ENCODE measurements at regions of chr18 and their contacts with region 1.

Region 1: DNA sequence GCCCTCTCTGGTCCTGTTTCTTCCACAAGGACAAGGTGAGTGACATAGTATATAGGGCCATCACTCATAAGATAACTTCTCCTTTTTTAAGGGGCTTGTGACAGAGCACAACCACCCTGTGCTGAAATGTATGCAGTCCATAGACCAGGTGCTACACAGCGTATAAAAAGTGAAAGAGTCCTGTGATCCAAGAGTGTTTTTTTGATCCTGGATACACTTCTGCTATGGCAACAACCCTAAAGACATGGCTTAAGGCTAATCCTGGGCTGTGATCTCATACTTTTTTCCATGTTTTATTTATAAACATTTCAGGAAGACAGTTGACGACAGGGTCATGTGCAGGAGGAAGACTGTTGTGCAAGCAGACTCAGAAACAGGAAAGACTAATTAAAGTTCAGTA is 400.5 kb upstream of the TCF4 start:
- DNase-seq: no peak

Region 2: DNA sequence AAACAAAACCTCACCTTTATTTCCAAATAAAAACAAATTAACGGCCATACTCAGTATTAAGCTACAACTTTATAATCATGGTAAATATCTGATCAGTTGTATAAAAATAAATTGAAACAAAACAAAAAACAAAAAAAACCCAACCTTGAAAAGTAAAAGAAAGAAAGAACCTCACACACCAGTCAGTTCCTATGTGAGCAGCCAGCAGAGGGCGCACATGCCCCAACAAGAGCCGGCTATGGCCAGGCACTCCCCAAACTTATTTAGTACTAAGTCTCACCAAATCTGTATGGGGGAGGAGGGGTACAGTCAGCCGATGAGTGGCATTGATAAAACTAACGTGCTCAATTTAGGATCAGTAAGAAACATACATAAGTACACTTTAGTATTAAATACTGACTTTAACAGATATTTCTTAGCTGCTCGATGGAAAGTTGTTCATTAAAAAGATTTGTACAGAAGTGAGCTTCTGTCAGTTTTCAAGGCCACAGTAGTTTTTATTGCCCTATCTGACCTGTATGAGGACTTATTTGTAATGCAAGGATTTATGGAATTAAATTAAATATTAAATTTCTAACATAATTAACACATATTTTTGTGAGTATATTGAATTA is 573.2 kb before region 1 on chr18:
- intact Hi-C with region 1: loop called (anchors 10 kb)
- DNase-seq: peak; percentile 89

Region 3: GRCh38 chr18:55509631-55510324 is 478.8 kb before region 1 on chr18:
- intact Hi-C with region 1: no loop called
- DNase-seq: no peak

Region 4: GRCh38 chr18:56200381-56200911 is 211.9 kb after region 1 on chr18:
- intact Hi-C with region 1: loop called (anchors 10 kb)
- DNase-seq: no peak

Measured in cardiac septum (tissue), 1 donor.